GM12878 (cell line): ENCODE measurements at regions of chr10 and their contacts with region 1.

Region 1: DNA sequence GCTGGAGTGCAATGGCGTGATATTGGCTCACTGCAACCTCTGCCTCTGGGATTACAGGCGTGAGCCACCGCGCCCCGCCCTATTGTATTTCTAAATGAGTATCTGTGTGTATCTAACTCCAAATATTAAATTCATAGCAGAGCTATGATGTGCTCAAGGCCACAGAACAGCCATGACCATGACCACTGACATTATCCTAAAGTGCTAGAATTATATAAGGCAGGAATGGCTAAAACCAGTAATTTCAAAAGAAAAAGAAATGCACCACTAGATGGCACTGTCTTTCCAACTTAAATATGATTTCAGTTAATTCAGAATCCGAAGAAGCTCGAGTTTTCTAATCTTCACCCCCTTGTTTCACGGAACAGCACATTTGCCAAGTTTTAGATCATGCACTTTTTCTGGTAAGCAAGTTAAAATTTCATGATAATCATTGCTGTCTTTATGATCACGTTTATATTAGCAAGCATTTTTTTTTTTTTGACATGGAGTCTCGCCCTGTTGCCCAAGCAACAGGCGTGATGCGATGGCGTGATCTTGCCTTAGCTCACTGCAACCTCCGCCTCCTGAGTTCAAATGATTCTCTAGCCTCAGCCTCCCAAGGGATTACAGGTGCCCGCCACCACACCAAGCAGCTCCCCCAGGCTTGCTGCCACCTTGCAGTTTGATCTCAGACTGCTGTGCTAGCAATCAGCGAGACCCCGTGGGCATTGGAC is 65.3 kb downstream of the OR13A1 start:
- DNase-seq: peak; percentile 57
- ATAC-seq: peak; percentile 82
- H3K4me3 ChIP-seq: peak overlapping the region; percentile 78
- H3K27ac ChIP-seq: peak overlapping the region; percentile 48
- H3K4me1 ChIP-seq: peaks cover 12% of the 10 kb centered on the region
- H3K27me3 ChIP-seq: no peaks in the 10 kb centered on the region
- CTCF ChIP-seq: peak; percentile 19 to 67 (median 45); a peak in 5 of 6 replicates
- EP300 ChIP-seq: no peak
- POLR2A ChIP-seq: no peak
- RAD21 ChIP-seq: peak; percentile 62

Region 2: GRCh38 chr10:45235798-45236231 is 14.3 kb before region 1 on chr10:
- CTCF ChIA-PET with region 1: interaction called, 21 read pairs
- POLR2A ChIA-PET with region 1: interaction called, 5 read pairs
- RAD21 ChIA-PET with region 1: interaction called, 7 read pairs
- SMC1A ChIA-PET with region 1: interaction called, 9 read pairs
- in situ Hi-C with region 1: no loop called
- intact Hi-C with region 1: no loop called
- DNase-seq: no peak
- ATAC-seq: no peak
- H3K4me3 ChIP-seq: no peak overlapping the region
- H3K27ac ChIP-seq: no peak overlapping the region
- H3K4me1 ChIP-seq: no peaks in the 10 kb centered on the region
- H3K27me3 ChIP-seq: no peaks in the 10 kb centered on the region; a peak in 1 of 4 replicates
- CTCF ChIP-seq: no peak
- EP300 ChIP-seq: no peak
- POLR2A ChIP-seq: no peak
- RAD21 ChIP-seq: no peak

Region 3: GRCh38 chr10:45280113-45280760 is 30.1 kb after region 1 on chr10:
- CTCF ChIA-PET with region 1: no interaction called
- POLR2A ChIA-PET with region 1: no interaction called
- RAD21 ChIA-PET with region 1: no interaction called
- SMC1A ChIA-PET with region 1: no interaction called
- in situ Hi-C with region 1: no loop called
- intact Hi-C with region 1: no loop called
- DNase-seq: no peak
- ATAC-seq: no peak
- H3K4me3 ChIP-seq: no peak overlapping the region
- H3K27ac ChIP-seq: no peak overlapping the region
- H3K4me1 ChIP-seq: no peaks in the 10 kb centered on the region
- H3K27me3 ChIP-seq: no peaks in the 10 kb centered on the region; a peak in 2 of 4 replicates
- CTCF ChIP-seq: no peak
- EP300 ChIP-seq: no peak
- POLR2A ChIP-seq: no peak
- RAD21 ChIP-seq: no peak

Region 4: DNA sequence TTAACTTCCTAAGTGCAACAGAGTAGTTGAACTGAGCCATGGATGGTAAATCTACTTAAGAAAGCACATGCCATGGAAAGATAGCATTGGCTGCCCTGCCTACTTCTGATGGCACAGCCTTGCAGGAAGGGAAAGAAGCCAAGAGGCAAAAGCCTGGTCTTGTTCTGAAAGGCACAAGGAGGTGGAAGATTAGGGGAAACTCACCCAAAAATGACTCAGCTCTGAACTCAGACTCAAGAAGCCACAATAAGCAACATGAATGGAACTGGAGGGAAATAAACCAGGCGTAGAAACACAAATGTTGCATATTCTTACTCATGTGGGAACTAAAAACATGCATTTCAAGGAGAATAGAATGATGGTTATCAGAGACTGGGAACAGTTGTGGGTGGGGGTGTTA is 103.0 kb after region 1 on chr10:
- CTCF ChIA-PET with region 1: no interaction called
- POLR2A ChIA-PET with region 1: no interaction called
- RAD21 ChIA-PET with region 1: no interaction called
- SMC1A ChIA-PET with region 1: interaction called, 3 read pairs
- in situ Hi-C with region 1: no loop called
- intact Hi-C with region 1: loop called (anchors 1 kb)
- DNase-seq: no peak
- ATAC-seq: peak; percentile 76
- H3K4me3 ChIP-seq: peak overlapping the region; percentile 37; the same call in 1 of the 2 replicates
- H3K27ac ChIP-seq: peak overlapping the region; percentile 70
- H3K4me1 ChIP-seq: peaks cover 37% of the 10 kb centered on the region
- H3K27me3 ChIP-seq: no peaks in the 10 kb centered on the region
- CTCF ChIP-seq: no peak
- EP300 ChIP-seq: no peak
- POLR2A ChIP-seq: no peak
- RAD21 ChIP-seq: no peak

Region 5: GRCh38 chr10:45373576-45374349 is 123.6 kb after region 1 on chr10 and contains the start of gene ALOX5:
- CTCF ChIA-PET with region 1: no interaction called
- POLR2A ChIA-PET with region 1: no interaction called
- RAD21 ChIA-PET with region 1: no interaction called
- SMC1A ChIA-PET with region 1: no interaction called
- in situ Hi-C with region 1: no loop called
- intact Hi-C with region 1: loop called (anchors 2 kb)
- DNase-seq: no peak
- ATAC-seq: peak; percentile 63
- H3K4me3 ChIP-seq: peak within 1 kb of the TSS; percentile 81
- H3K27ac ChIP-seq: peak within 1 kb of the TSS; percentile 74
- H3K4me1 ChIP-seq: peaks cover 33% of the 10 kb centered on the region
- H3K27me3 ChIP-seq: no peaks in the 10 kb centered on the region
- CTCF ChIP-seq: no peak
- EP300 ChIP-seq: no peak
- POLR2A ChIP-seq: peak; percentile 49
- RAD21 ChIP-seq: no peak
- polyA plus RNA-seq, gene ALOX5: 3.3 to 6.5 TPM

Region 6: GRCh38 chr10:45672181-45673073 is 422.3 kb after region 1 on chr10 and contains the start of gene ZFAND4:
- CTCF ChIA-PET with region 1: interaction called, 9 read pairs
- POLR2A ChIA-PET with region 1: no interaction called
- RAD21 ChIA-PET with region 1: interaction called, 8 read pairs
- SMC1A ChIA-PET with region 1: interaction called, 10 read pairs
- in situ Hi-C with region 1: loop called (anchors 5 kb)
- intact Hi-C with region 1: loop called (anchors 5 kb)
- DNase-seq: peak; percentile 82
- ATAC-seq: peak; percentile 97
- H3K4me3 ChIP-seq: peak within 1 kb of the TSS; percentile 82
- H3K27ac ChIP-seq: peak within 1 kb of the TSS; percentile 54
- H3K4me1 ChIP-seq: peaks cover 7% of the 10 kb centered on the region
- H3K27me3 ChIP-seq: no peaks in the 10 kb centered on the region
- CTCF ChIP-seq: peak; percentile 56 to 84 (median 64); a peak in 4 of 6 replicates
- EP300 ChIP-seq: peak in 1 of 2 experiments; percentile 35; a peak in 1 of 4 replicates
- POLR2A ChIP-seq: peak; percentile 86
- RAD21 ChIP-seq: peak; percentile 63
- polyA plus RNA-seq, gene ZFAND4: 4.7 to 6.2 TPM

Region 7: GRCh38 chr10:46022978-46023702 is 773.0 kb after region 1 on chr10:
- CTCF ChIA-PET with region 1: interaction called, 12 read pairs
- POLR2A ChIA-PET with region 1: no interaction called
- RAD21 ChIA-PET with region 1: interaction called, 3 read pairs
- SMC1A ChIA-PET with region 1: interaction called, 6 read pairs
- in situ Hi-C with region 1: no loop called
- intact Hi-C with region 1: loop called (anchors 5 kb)
- DNase-seq: peak; percentile 56
- ATAC-seq: peak; percentile 97
- H3K4me3 ChIP-seq: peak overlapping the region; percentile 58
- H3K27ac ChIP-seq: peak overlapping the region; percentile 59
- H3K4me1 ChIP-seq: peaks cover 12% of the 10 kb centered on the region
- H3K27me3 ChIP-seq: no peaks in the 10 kb centered on the region
- CTCF ChIP-seq: peak; percentile 22 to 57 (median 56); a peak in 4 of 6 replicates
- EP300 ChIP-seq: no peak
- POLR2A ChIP-seq: peak; percentile 81
- RAD21 ChIP-seq: peak; percentile 30; the same call in 1 of the 2 replicates

Region 8: DNA sequence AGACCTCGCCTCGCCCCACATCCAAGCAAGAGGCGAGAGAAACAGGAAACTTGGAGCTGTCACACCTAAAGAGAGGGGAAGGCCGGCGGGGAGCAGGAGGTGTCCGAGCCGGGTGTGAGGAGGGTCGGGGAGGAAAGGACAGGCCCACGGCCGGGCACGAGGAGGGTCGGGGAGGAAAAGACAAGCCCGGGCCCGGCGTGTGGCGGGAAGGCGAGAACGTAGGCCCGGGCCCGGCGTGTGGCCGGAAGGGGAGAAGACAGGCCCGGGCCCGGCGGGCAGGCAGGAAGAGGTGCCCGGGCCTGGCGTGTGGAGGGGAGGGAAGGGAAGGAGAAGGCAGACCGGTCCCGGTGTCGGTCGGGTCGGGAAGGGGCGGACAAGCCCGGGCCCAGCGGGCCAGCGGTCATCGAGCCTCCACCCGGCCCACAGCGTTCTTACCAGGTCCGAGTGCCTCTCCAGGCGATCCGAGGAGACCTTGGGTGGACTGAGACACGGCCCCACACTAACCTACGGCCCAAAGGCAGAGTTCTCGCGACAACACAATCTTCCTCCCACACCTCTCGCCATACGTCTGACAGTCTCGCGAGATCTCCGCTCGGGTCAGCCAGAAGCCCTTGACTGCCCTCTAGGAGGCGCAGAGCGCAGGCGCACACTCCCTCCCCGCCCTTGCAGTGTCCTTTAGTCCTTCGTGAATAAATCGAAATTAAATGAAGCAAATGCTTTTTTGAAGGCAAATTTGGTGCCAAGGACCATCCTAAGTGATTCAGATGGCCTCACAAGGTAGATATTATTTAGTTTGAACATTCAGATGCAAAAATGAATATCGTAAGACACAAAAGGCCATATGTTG is 780.2 kb after region 1 on chr10 and contains the start of gene NCOA4:
- CTCF ChIA-PET with region 1: interaction called, 12 read pairs
- POLR2A ChIA-PET with region 1: no interaction called
- RAD21 ChIA-PET with region 1: interaction called, 9 read pairs
- SMC1A ChIA-PET with region 1: interaction called, 6 read pairs
- in situ Hi-C with region 1: no loop called
- intact Hi-C with region 1: no loop called
- DNase-seq: peak; percentile 95
- ATAC-seq: peak; percentile 97
- H3K4me3 ChIP-seq: peak within 1 kb of the TSS; percentile 73
- H3K27ac ChIP-seq: peak within 1 kb of the TSS; percentile 80
- H3K4me1 ChIP-seq: no peaks in the 10 kb centered on the region; the same call in none of the 2 replicates
- H3K27me3 ChIP-seq: no peaks in the 10 kb centered on the region
- CTCF ChIP-seq: peak; percentile 82 to 90 (median 86)
- EP300 ChIP-seq: no peak
- POLR2A ChIP-seq: peak; percentile 96
- RAD21 ChIP-seq: peak; percentile 30; the same call in 1 of the 2 replicates
- polyA plus RNA-seq, gene NCOA4: 57.5 to 62.6 TPM